GM10248 (cell line): ENCODE measurements at regions of chr7 and their contacts with region 1.

Region 1: DNA sequence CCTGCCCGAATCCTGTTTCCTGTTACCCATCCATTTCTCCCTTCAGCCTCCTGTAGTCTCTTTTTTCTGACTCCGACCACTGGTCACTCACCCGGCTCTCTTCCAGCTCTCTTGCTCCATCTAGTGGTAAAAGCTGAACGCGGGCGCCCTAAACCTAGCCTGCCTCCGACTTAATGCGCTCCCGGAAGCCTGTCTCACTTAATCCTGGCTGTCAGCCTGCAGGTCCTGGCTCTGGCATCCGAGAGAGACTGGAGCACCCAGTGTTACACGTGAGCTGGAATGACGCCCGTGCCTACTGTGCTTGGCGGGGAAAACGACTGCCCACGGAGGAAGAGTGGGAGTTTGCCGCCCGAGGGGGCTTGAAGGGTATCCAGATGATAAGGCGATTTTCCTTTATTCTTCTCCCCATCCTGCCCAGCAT is 10.3 kb downstream of the SUMF2 start:
- DNase-seq: peak; percentile 78
- CTCF ChIP-seq: peak; percentile 85

Region 2: GRCh38 chr7:56007167-56007652 is 67.2 kb before region 1 on chr7:
- CTCF ChIA-PET with region 1: interaction called, 33 read pairs
- POLR2A ChIA-PET with region 1: no interaction called
- DNase-seq: no peak
- CTCF ChIP-seq: no peak

Region 3: DNA sequence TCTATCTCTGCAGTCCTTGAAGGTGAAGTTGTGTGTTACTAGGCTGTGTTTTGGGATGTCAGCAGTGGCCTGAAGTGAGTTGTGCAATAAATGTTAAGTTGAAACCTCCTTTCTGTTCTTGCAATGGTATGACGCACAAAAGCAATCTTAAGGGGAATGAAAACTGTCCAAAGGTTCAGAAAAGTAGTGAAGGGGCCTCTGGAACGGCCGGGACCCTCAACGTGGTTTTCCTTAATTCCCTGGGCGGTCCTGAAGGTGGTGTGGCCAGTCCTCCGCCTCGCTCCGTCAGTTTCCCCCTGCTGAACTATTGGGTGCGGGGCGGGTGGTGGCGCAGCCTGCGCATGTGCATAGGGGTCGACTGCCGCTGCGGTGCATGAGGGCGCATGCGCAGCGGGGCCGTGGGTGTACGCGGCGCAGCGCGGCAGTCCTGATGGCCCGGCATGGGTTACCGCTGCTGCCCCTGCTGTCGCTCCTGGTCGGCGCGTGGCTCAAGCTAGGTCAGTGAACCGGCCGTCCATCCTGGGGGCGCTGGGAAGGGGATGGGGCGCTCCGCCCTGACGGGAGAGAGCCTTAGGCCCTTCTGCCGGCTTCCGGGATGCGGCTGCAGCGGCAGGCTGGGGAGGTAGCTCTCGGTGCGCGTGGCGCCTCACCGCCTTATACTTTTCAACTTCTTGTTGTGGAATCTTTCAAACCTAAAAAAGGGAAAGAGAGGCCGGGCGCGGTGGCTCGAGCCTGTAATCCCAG is 10.3 kb before region 1 on chr7 and contains the start of gene SUMF2:
- CTCF ChIA-PET with region 1: interaction called, 27 read pairs
- POLR2A ChIA-PET with region 1: no interaction called
- DNase-seq: peak; percentile 98
- CTCF ChIP-seq: no peak

Region 4: GRCh38 chr7:56199639-56200038 is 125.3 kb after region 1 on chr7:
- CTCF ChIA-PET with region 1: no interaction called
- POLR2A ChIA-PET with region 1: no interaction called
- DNase-seq: no peak
- CTCF ChIP-seq: no peak